ENCODE measurements at regions of chr1 and their contacts with region 1.

Region 1: GRCh38 chr1:163169553-163169952 is 33.2 kb downstream of the RGS5 start:
- DNase-seq: no peak
- H3K4me3 ChIP-seq: no peak overlapping the region
- H3K4me3 Mint-ChIP-seq: no peak overlapping the region
- H3K27ac Mint-ChIP-seq: no peak overlapping the region
- H3K4me1 ChIP-seq: no peaks in the 10 kb centered on the region
- H3K4me1 Mint-ChIP-seq: no peaks in the 10 kb centered on the region
- H3K27me3 ChIP-seq: no peaks in the 10 kb centered on the region
- H3K27me3 Mint-ChIP-seq: peaks cover 6% of the 10 kb centered on the region
- CTCF ChIP-seq: no peak

Region 2: GRCh38 chr1:163131981-163132380 is 37.6 kb before region 1 on chr1:
- CTCF ChIA-PET with region 1: no interaction called
- POLR2A ChIA-PET with region 1: no interaction called
- intact Hi-C with region 1: loop called (anchors 1 kb)
- DNase-seq: no peak
- H3K4me3 ChIP-seq: no peak overlapping the region
- H3K4me3 Mint-ChIP-seq: no peak overlapping the region
- H3K27ac Mint-ChIP-seq: no peak overlapping the region
- H3K4me1 ChIP-seq: no peaks in the 10 kb centered on the region
- H3K4me1 Mint-ChIP-seq: no peaks in the 10 kb centered on the region
- H3K27me3 ChIP-seq: no peaks in the 10 kb centered on the region
- H3K27me3 Mint-ChIP-seq: peaks cover 3% of the 10 kb centered on the region
- CTCF ChIP-seq: no peak

Region 3: GRCh38 chr1:163182330-163182949 is 12.9 kb after region 1 on chr1:
- CTCF ChIA-PET with region 1: no interaction called
- POLR2A ChIA-PET with region 1: no interaction called
- intact Hi-C with region 1: no loop called
- DNase-seq: no peak
- H3K4me3 ChIP-seq: no peak overlapping the region
- H3K4me3 Mint-ChIP-seq: no peak overlapping the region
- H3K27ac Mint-ChIP-seq: no peak overlapping the region
- H3K4me1 ChIP-seq: peaks cover 10% of the 10 kb centered on the region; the same call in 1 of the 2 replicates
- H3K4me1 Mint-ChIP-seq: peaks cover 10% of the 10 kb centered on the region
- H3K27me3 ChIP-seq: no peaks in the 10 kb centered on the region
- H3K27me3 Mint-ChIP-seq: peaks cover 7% of the 10 kb centered on the region
- CTCF ChIP-seq: no peak